ENCODE measurements at regions of chr14 and their contacts with region 1.

Region 1: GRCh38 chr14:33839193-33840076 is 111.4 kb downstream of the EGLN3 start:
- DNase-seq: peak; percentile 35 to 60
- ATAC-seq: peak; percentile 76 to 95 (median 85)
- H3K4me3 ChIP-seq: no peak overlapping the region
- H3K27ac ChIP-seq: no peak overlapping the region
- H3K4me1 ChIP-seq: peaks cover 9% of the 10 kb centered on the region
- H3K27me3 ChIP-seq: no peaks in the 10 kb centered on the region
- CTCF ChIP-seq: peak; percentile 91

Region 2: GRCh38 chr14:34098045-34098984 is 258.9 kb after region 1 on chr14:
- intact Hi-C with region 1: loop called (anchors 2 to 10 kb)
- DNase-seq: peak; percentile 17 to 62
- ATAC-seq: peak in 3 of 4 donors; percentile 25 to 65 (median 56)
- H3K4me3 ChIP-seq: no peak overlapping the region
- H3K27ac ChIP-seq: no peak overlapping the region
- H3K4me1 ChIP-seq: no peaks in the 10 kb centered on the region
- H3K27me3 ChIP-seq: no peaks in the 10 kb centered on the region
- CTCF ChIP-seq: peak; percentile 56

Region 3: DNA sequence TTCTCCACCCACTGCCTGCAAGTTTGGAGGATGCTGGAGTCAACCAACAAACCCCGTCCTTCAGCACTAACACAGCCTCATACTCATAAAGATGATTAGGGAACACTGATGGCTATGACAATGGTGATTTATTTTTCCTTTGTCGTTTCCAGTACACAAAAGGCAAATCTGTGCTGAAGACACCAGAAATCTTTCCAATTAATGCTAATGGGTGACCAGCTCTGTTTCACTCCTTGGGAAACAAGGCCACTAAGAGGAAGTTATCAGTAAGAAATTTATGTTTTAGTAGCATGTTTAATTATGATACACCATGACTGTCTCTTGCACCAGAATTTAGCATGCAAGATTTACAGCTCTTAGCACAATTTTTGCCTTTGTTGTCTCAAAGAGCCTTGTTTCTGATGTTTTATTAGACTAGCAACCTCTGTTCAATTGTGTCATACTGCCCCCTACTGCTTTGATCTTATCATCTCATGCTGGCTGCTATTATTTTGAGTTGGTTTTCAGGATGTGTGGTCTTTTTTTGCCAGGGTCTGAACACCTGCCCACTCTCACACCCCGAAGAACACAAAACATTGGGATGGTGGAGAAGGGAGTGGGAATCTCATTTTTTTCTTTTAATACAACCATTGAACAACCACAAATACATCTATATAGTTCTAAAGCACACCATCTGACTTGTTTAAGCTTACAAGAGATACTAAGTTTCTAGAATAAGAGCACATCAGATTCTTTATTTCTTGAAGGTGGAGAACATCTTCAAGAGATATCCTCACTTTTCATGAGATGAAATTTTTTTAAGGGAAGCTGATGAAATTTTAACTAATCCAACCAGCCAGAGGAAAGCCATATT is 461.7 kb after region 1 on chr14:
- intact Hi-C with region 1: loop called (anchors 2 to 5 kb)
- DNase-seq: no peak
- ATAC-seq: peak; percentile 39 to 74 (median 60)
- H3K4me3 ChIP-seq: no peak overlapping the region
- H3K27ac ChIP-seq: no peak overlapping the region
- H3K4me1 ChIP-seq: no peaks in the 10 kb centered on the region
- H3K27me3 ChIP-seq: no peaks in the 10 kb centered on the region
- CTCF ChIP-seq: peak; percentile 66

Region 4: DNA sequence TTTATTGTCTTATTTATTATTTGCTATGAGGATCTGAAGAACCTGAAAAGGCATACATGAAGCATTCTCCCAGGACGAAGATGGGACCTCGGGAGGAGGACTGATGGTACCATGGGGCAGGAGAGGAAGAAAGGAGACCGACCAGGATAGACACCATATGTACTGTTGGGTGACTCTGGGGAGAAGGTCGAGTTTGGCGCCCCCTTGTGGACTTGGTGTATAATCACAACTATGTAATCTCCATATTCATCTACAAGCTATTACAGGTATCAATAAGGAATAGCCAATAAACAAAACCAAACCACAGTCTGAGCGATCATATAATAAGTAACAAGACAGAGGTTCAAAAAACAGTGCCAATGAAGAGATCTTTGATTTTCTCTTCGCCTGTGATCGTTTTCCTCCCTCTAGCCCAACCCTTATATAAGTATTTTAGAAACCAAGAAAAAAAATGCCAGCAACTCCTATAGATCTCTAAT is 483.5 kb after region 1 on chr14:
- intact Hi-C with region 1: loop called in 1 of 2 experiments (anchors 5 kb)
- DNase-seq: peak; percentile 52 to 75
- ATAC-seq: peak; percentile 58 to 91 (median 74)
- H3K4me3 ChIP-seq: no peak overlapping the region
- H3K27ac ChIP-seq: no peak overlapping the region
- H3K4me1 ChIP-seq: no peaks in the 10 kb centered on the region
- H3K27me3 ChIP-seq: peaks cover 0 to 2% (median 0%) of the 10 kb centered on the region in 3 donors
- CTCF ChIP-seq: peak; percentile 69